GM12878 (cell line): ENCODE measurements at regions of chr3 and their contacts with region 1.

Region 1: DNA sequence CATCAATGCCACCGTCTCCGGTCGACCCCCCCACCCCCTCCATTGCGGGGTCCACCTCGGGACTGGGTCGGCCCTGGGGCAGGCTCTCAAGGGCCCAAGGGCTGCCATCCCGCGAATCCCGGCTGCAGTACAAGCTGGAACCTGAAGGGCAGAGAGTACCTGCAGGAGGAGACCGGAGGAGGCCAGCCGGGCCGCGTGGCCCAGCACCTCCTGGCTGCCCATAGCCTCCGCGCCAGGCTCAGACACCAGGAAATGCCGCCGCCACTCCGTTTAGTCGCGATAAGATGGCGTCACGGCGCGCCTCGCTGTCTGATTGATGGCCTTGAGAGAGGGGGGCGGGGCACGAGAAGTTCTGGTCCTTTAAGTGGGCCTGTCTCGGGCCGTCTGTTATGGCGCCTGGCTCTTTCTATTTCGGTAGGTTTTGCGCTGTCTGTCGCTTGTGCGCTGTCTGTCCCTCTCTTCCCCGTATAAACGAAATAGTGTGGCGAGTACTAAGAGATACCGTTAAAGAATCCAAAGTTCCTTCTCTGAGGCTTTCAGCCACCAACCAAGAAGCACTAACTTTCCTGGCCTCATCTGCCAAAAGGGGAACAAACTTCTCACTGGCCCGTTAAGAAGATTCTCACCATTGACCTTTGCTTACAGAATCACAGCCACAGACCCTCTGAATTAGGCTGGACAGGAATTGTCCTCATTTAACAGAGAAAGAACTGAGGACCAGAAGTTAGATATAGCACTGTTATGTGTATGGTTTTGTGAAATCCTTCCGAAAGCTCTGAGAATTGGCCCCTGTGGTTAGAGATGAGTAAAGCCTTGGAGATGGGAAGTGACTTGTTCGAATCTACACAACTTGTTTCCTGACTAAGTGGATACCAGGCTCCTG is at the start of gene RFT1:
- DNase-seq: peak; percentile 73
- ATAC-seq: peak; percentile 89
- H3K4me3 ChIP-seq: peak within 1 kb of the TSS; percentile 92
- H3K27ac ChIP-seq: peak within 1 kb of the TSS; percentile 87
- H3K4me1 ChIP-seq: peaks cover 7% of the 10 kb centered on the region; the same call in 1 of the 2 replicates
- H3K27me3 ChIP-seq: no peaks in the 10 kb centered on the region
- CTCF ChIP-seq: no peak
- EP300 ChIP-seq: no peak
- POLR2A ChIP-seq: peak; percentile 98
- RAD21 ChIP-seq: no peak
- polyA plus RNA-seq, gene RFT1: 24.7 to 29.0 TPM

Region 2: GRCh38 chr3:52831500-52832301 is 298.7 kb before region 1 on chr3:
- CTCF ChIA-PET with region 1: no interaction called
- POLR2A ChIA-PET with region 1: no interaction called
- RAD21 ChIA-PET with region 1: no interaction called
- SMC1A ChIA-PET with region 1: no interaction called
- in situ Hi-C with region 1: no loop called
- intact Hi-C with region 1: no loop called
- DNase-seq: no peak
- ATAC-seq: no peak
- H3K4me3 ChIP-seq: no peak overlapping the region
- H3K27ac ChIP-seq: no peak overlapping the region
- H3K4me1 ChIP-seq: no peaks in the 10 kb centered on the region
- H3K27me3 ChIP-seq: no peaks in the 10 kb centered on the region
- CTCF ChIP-seq: no peak
- EP300 ChIP-seq: no peak
- POLR2A ChIP-seq: no peak
- RAD21 ChIP-seq: no peak

Region 3: DNA sequence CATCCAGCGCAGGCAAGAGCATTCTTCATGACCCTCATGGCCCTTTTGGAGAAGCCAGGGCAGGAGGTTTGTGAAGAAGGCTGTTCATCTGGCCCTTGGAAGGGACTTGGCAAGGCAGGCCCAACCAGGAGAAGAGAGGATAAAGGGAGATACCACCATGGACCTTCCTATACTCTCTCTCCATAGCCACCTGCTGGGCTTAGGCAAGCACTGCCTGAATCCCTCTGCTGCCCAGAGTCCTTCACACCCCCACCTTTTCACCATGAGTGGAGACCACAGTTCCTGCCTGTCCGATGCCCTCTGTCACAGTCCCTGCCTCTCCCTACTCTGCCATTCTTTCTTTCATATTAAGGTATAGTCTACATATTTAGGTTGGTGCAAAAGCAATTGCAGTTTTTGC is 74.0 kb before region 1 on chr3:
- CTCF ChIA-PET with region 1: no interaction called
- POLR2A ChIA-PET with region 1: no interaction called
- RAD21 ChIA-PET with region 1: no interaction called
- SMC1A ChIA-PET with region 1: no interaction called
- in situ Hi-C with region 1: no loop called
- intact Hi-C with region 1: no loop called
- DNase-seq: no peak
- ATAC-seq: peak; percentile 80
- H3K4me3 ChIP-seq: no peak overlapping the region
- H3K27ac ChIP-seq: no peak overlapping the region
- H3K4me1 ChIP-seq: no peaks in the 10 kb centered on the region
- H3K27me3 ChIP-seq: no peaks in the 10 kb centered on the region
- CTCF ChIP-seq: peak; percentile 15 to 35 (median 28); a peak in 3 of 6 replicates
- EP300 ChIP-seq: no peak
- POLR2A ChIP-seq: no peak
- RAD21 ChIP-seq: 0 out of 2 replicates have a peak, but pooled peaks have one; percentile 5

Region 4: GRCh38 chr3:53140847-53141845 is 10.7 kb after region 1 on chr3:
- CTCF ChIA-PET with region 1: interaction called, 27 read pairs
- POLR2A ChIA-PET with region 1: interaction called, 10 read pairs
- RAD21 ChIA-PET with region 1: interaction called, 7 read pairs
- SMC1A ChIA-PET with region 1: interaction called, 65 read pairs
- in situ Hi-C with region 1: no loop called
- intact Hi-C with region 1: no loop called
- DNase-seq: no peak
- ATAC-seq: peak; percentile 43
- H3K4me3 ChIP-seq: no peak overlapping the region
- H3K27ac ChIP-seq: no peak overlapping the region
- H3K4me1 ChIP-seq: peaks cover 13% of the 10 kb centered on the region
- H3K27me3 ChIP-seq: no peaks in the 10 kb centered on the region
- CTCF ChIP-seq: no peak
- EP300 ChIP-seq: no peak
- POLR2A ChIP-seq: no peak
- RAD21 ChIP-seq: no peak

Region 5: GRCh38 chr3:53155760-53156159 is 25.3 kb after region 1 on chr3:
- CTCF ChIA-PET with region 1: interaction called, 45 read pairs
- POLR2A ChIA-PET with region 1: interaction called, 4 read pairs
- RAD21 ChIA-PET with region 1: interaction called, 10 read pairs
- SMC1A ChIA-PET with region 1: interaction called, 9 read pairs
- in situ Hi-C with region 1: no loop called
- intact Hi-C with region 1: loop called (anchors 2 kb)
- DNase-seq: no peak
- ATAC-seq: no peak
- H3K4me3 ChIP-seq: no peak overlapping the region
- H3K27ac ChIP-seq: no peak overlapping the region
- H3K4me1 ChIP-seq: peaks cover 19% of the 10 kb centered on the region
- H3K27me3 ChIP-seq: no peaks in the 10 kb centered on the region; a peak in 1 of 4 replicates
- CTCF ChIP-seq: no peak
- EP300 ChIP-seq: no peak
- POLR2A ChIP-seq: no peak
- RAD21 ChIP-seq: no peak

Region 6: GRCh38 chr3:53166781-53167291 is 36.4 kb after region 1 on chr3:
- CTCF ChIA-PET with region 1: interaction called, 38 read pairs
- POLR2A ChIA-PET with region 1: interaction called, 13 read pairs
- RAD21 ChIA-PET with region 1: interaction called, 26 read pairs
- SMC1A ChIA-PET with region 1: interaction called, 26 read pairs
- in situ Hi-C with region 1: no loop called
- intact Hi-C with region 1: no loop called
- DNase-seq: no peak
- ATAC-seq: peak; percentile 19
- H3K4me3 ChIP-seq: peak overlapping the region; percentile 68
- H3K27ac ChIP-seq: peak overlapping the region; percentile 81
- H3K4me1 ChIP-seq: peaks cover 84% of the 10 kb centered on the region
- H3K27me3 ChIP-seq: no peaks in the 10 kb centered on the region
- CTCF ChIP-seq: no peak
- EP300 ChIP-seq: no peak
- POLR2A ChIP-seq: peak; percentile 11; the same call in 1 of the 2 replicates
- RAD21 ChIP-seq: no peak